PC-9 (cell line): ENCODE measurements at regions of chr12 and their contacts with region 1.

Region 1: DNA sequence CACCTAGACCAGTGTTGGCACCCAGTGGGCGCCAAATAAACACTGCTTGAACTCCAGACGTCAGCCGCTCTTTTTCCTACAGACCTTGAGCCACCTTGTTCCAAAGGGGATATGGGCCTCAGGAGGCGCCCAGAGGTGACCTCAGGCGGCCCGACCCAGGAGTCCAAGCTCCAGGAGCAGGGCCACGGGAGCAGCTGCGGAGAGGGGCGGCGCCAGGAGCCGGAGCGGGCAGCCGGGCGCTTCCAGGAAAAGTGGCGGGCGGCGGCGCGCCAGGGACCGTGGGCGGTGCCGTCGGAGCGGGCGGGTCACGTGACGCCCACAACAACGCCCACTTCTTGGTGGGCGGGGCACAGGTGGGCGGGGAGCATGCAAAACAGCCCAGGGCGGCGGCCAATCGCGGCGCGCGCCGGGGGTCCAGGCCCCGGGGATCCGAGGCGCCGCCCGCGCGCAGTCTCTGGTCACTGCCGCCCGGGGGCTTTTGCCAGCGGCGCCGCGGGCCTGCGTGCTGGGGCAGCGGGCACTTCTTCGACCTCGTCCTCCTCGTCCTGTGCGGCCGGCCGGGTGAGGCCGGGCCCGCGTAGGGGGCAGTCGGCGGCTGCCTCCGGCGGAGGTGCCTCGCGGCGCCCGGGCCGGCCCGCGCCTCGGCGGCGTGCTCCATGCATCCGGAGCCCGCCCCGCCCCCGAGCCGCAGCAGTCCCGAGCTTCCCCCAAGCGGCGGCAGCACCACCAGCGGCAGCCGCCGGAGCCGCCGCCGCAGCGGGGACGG is at the start of gene ORAI1:
- DNase-seq: peak; percentile 66 to 97
- H3K4me3 ChIP-seq: peak within 1 kb of the TSS; percentile 92
- H3K27ac ChIP-seq: peak within 1 kb of the TSS; percentile 44
- H3K4me1 ChIP-seq: peaks cover 29% of the 10 kb centered on the region
- H3K27me3 ChIP-seq: no peaks in the 10 kb centered on the region
- CTCF ChIP-seq: no peak
- total RNA-seq, gene ORAI1: 25.6 and 28.1 TPM in 2 replicates

Region 2: GRCh38 chr12:121499929-121500793 is 126.1 kb before region 1 on chr12:
- CTCF ChIA-PET with region 1: no interaction called
- POLR2A ChIA-PET with region 1: no interaction called
- intact Hi-C with region 1: loop called (anchors 1 kb)
- DNase-seq: peak; percentile 39 to 68
- H3K4me3 ChIP-seq: no peak overlapping the region
- H3K27ac ChIP-seq: no peak overlapping the region
- H3K4me1 ChIP-seq: no peaks in the 10 kb centered on the region
- H3K27me3 ChIP-seq: no peaks in the 10 kb centered on the region
- CTCF ChIP-seq: peak; percentile 91

Region 3: DNA sequence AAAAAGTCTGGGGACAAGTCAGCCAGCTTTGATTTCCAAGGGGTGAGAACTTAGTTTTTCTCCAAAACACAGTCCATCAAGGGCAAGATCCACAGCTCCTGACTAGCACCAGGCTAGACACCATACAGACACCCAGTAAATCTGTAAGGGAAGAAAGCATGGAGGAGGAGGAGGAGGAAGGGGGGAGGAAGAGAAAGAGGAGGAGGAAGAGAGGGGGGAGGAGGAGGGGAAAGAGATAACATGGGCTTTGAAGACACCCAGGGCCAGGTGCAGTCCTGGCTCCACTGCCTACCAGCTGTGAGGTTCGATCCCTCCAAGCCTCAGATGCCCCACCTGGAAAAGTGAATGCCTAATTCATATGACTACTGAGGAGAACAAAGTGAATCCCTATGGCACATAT is 63.8 kb before region 1 on chr12:
- CTCF ChIA-PET with region 1: interaction called, 15 read pairs
- POLR2A ChIA-PET with region 1: no interaction called
- intact Hi-C with region 1: no loop called
- DNase-seq: no peak
- H3K4me3 ChIP-seq: no peak overlapping the region
- H3K27ac ChIP-seq: no peak overlapping the region
- H3K4me1 ChIP-seq: no peaks in the 10 kb centered on the region
- H3K27me3 ChIP-seq: no peaks in the 10 kb centered on the region
- CTCF ChIP-seq: no peak

Region 4: GRCh38 chr12:121579981-121580868 is 46.0 kb before region 1 on chr12:
- CTCF ChIA-PET with region 1: interaction called, 10 read pairs
- POLR2A ChIA-PET with region 1: interaction called, 7 read pairs
- intact Hi-C with region 1: loop called (anchors 5 kb)
- DNase-seq: peak in 1 of 2 experiments; percentile 54
- H3K4me3 ChIP-seq: peak overlapping the region; percentile 86
- H3K27ac ChIP-seq: no peak overlapping the region
- H3K4me1 ChIP-seq: peaks cover 39% of the 10 kb centered on the region
- H3K27me3 ChIP-seq: no peaks in the 10 kb centered on the region
- CTCF ChIP-seq: no peak

Region 5: GRCh38 chr12:121688966-121689365 is 62.7 kb after region 1 on chr12:
- CTCF ChIA-PET with region 1: interaction called, 3 read pairs
- POLR2A ChIA-PET with region 1: no interaction called
- intact Hi-C with region 1: loop called (anchors 2 kb)
- DNase-seq: no peak
- H3K4me3 ChIP-seq: no peak overlapping the region
- H3K27ac ChIP-seq: no peak overlapping the region
- H3K4me1 ChIP-seq: peaks cover 4% of the 10 kb centered on the region; the same call in 1 of the 2 replicates
- H3K27me3 ChIP-seq: no peaks in the 10 kb centered on the region
- CTCF ChIP-seq: no peak

Region 6: GRCh38 chr12:121773011-121773777 is 146.9 kb after region 1 on chr12:
- CTCF ChIA-PET with region 1: no interaction called
- POLR2A ChIA-PET with region 1: no interaction called
- intact Hi-C with region 1: loop called (anchors 5 kb)
- DNase-seq: peak; percentile 70 to 80
- H3K4me3 ChIP-seq: no peak overlapping the region
- H3K27ac ChIP-seq: no peak overlapping the region
- H3K4me1 ChIP-seq: peaks cover 20% of the 10 kb centered on the region
- H3K27me3 ChIP-seq: no peaks in the 10 kb centered on the region
- CTCF ChIP-seq: peak; percentile 86